ENCODE measurements at regions of chr3 and their contacts with region 1.

Region 1: GRCh38 chr3:31550452-31551251 is 17.9 kb downstream of the STT3B start:
- DNase-seq: peak in 5 of 9 donors; percentile 21 to 47 (median 29)
- ATAC-seq: peak; percentile 79
- H3K4me3 ChIP-seq: no peak overlapping the region
- H3K4me3 Mint-ChIP-seq: peak overlapping the region; percentile 0 to 69 (median 34)
- H3K27ac ChIP-seq: peak overlapping the region; percentile 1
- H3K27ac Mint-ChIP-seq: peak overlapping the region in 8 of 9 donors; percentile 19 to 79 (median 48)
- H3K4me1 ChIP-seq: peaks cover 20 to 40% of the 10 kb centered on the region in 2 donors
- H3K4me1 Mint-ChIP-seq: peaks cover 65 to 94% (median 92%) of the 10 kb centered on the region in 7 donors
- H3K27me3 ChIP-seq: no peaks in the 10 kb centered on the region
- H3K27me3 Mint-ChIP-seq: no peaks in the 10 kb centered on the region

Region 2: DNA sequence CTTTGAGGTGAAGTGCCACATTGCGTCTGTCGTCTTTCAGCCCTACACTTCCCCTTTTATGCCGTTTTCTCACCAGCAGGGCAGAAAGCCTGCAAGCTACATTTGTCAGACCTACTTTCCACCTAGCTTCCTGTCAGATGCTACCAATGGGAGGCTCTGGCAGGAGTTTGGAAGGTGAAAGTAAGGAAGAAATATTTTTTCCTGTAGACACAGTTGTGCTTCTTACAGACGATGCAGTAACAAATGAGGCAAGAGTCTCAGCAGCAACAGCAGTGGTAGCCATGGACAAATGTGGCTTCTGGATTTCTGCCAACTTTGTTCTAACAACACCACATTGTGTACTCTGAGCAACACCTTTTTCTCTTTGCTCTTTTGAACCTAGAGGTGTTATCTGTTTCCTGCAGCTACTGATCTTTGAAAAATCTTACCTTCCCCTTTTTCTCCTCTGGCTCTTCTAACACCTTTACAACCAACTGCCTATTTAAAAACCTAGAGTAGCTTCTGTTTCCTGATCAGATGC is 88.5 kb before region 1 on chr3:
- CTCF ChIA-PET with region 1: no interaction called
- POLR2A ChIA-PET with region 1: no interaction called
- intact Hi-C with region 1: loop called in 1 of 2 experiments (anchors 1 kb)
- DNase-seq: peak in 7 of 9 donors; percentile 78 to 93 (median 86)
- ATAC-seq: peak; percentile 93
- H3K4me3 ChIP-seq: peak overlapping the region; percentile 49
- H3K4me3 Mint-ChIP-seq: peak overlapping the region; percentile 28 to 95 (median 78)
- H3K27ac ChIP-seq: peak overlapping the region; percentile 68
- H3K27ac Mint-ChIP-seq: peak overlapping the region; percentile 70 to 100 (median 96)
- H3K4me1 ChIP-seq: peaks cover 49 to 59% of the 10 kb centered on the region in 2 donors
- H3K4me1 Mint-ChIP-seq: peaks cover 14 to 79% (median 68%) of the 10 kb centered on the region in 7 donors
- H3K27me3 ChIP-seq: no peaks in the 10 kb centered on the region
- H3K27me3 Mint-ChIP-seq: no peaks in the 10 kb centered on the region

Region 3: DNA sequence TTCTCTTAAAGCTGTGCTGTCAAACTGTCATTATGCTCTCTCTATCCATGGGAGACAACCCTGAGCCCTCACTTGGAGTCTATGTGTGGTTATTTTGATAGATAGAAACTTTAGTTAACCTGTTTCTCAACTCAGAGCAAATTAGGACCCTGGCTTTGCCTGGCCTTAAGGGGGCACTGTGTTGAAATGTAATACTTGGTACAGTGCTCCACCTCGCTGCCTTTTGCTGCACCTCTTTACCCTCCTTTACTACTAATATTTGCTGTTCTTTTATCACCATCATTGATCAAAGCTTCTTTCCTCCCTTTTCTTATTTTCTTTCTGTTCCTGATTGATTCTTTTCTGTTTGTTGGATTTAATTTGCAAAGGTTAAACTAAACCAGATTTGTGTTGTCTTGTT is 16.4 kb after region 1 on chr3:
- CTCF ChIA-PET with region 1: interaction called, 3 read pairs
- POLR2A ChIA-PET with region 1: interaction called, 5 read pairs
- intact Hi-C with region 1: loop called in 1 of 2 experiments (anchors 2 kb)
- DNase-seq: peak in 7 of 9 donors; percentile 14 to 41 (median 21)
- ATAC-seq: peak; percentile 82
- H3K4me3 ChIP-seq: no peak overlapping the region
- H3K4me3 Mint-ChIP-seq: peak overlapping the region in 8 of 10 donors; percentile 3 to 59 (median 56)
- H3K27ac ChIP-seq: no peak overlapping the region
- H3K27ac Mint-ChIP-seq: peak overlapping the region in 4 of 9 donors; percentile 11 to 33 (median 20)
- H3K4me1 ChIP-seq: peaks cover 38 to 57% of the 10 kb centered on the region in 2 donors
- H3K4me1 Mint-ChIP-seq: peaks cover 63 to 95% (median 91%) of the 10 kb centered on the region in 7 donors
- H3K27me3 ChIP-seq: no peaks in the 10 kb centered on the region
- H3K27me3 Mint-ChIP-seq: no peaks in the 10 kb centered on the region

Region 4: GRCh38 chr3:31592764-31593163 is 42.1 kb after region 1 on chr3:
- CTCF ChIA-PET with region 1: no interaction called
- POLR2A ChIA-PET with region 1: no interaction called
- intact Hi-C with region 1: loop called in 1 of 2 experiments (anchors 5 kb)
- DNase-seq: no peak
- ATAC-seq: no peak
- H3K4me3 ChIP-seq: no peak overlapping the region
- H3K4me3 Mint-ChIP-seq: peak overlapping the region in 5 of 10 donors; percentile 40 to 67 (median 50)
- H3K27ac ChIP-seq: no peak overlapping the region
- H3K27ac Mint-ChIP-seq: peak overlapping the region in 1 of 9 donors; percentile 67
- H3K4me1 ChIP-seq: peaks cover 0 to 4% of the 10 kb centered on the region in 2 donors
- H3K4me1 Mint-ChIP-seq: peaks cover 34 to 70% (median 52%) of the 10 kb centered on the region in 7 donors
- H3K27me3 ChIP-seq: no peaks in the 10 kb centered on the region
- H3K27me3 Mint-ChIP-seq: no peaks in the 10 kb centered on the region

Region 5: DNA sequence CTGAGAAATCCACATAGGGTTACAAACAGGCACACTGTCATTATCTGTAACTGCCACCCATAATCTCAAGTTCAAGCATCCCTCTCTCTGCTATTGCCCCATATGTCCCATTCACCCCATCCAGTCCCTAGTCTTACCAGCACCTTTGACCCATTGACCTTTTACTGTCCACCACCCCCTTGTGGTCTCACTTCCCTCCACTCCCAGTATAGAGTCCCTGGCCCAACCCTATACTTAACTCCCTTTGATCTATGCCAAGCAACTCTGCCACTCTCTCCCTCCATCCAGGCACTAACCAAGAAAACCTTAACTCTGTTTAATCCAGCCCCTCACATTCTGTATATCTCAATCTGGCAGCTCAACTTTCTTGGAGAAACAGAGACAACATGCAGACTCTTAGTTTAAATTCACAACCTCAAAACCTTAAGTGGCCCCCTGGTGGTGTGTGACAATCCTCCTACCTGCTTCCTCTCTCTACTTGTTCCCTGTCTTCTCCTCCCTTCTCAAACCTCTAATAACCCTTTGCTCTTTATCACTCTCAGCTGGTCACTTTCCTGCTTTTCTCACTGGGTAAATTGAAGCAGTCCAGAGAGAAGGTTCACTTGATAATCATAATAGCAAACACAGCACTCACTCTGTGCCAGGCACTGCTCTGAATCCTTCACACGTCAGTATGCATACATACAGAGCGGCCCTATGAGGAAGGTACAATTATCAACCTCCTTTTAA is 144.8 kb after region 1 on chr3:
- CTCF ChIA-PET with region 1: no interaction called
- POLR2A ChIA-PET with region 1: no interaction called
- intact Hi-C with region 1: loop called (anchors 1 to 2 kb)
- DNase-seq: peak in 6 of 9 donors; percentile 11 to 42 (median 36)
- ATAC-seq: peak; percentile 52
- H3K4me3 ChIP-seq: no peak overlapping the region
- H3K4me3 Mint-ChIP-seq: no peak overlapping the region
- H3K27ac ChIP-seq: no peak overlapping the region
- H3K27ac Mint-ChIP-seq: no peak overlapping the region
- H3K4me1 ChIP-seq: no peaks in the 10 kb centered on the region
- H3K4me1 Mint-ChIP-seq: peaks cover 0 to 1% (median 0%) of the 10 kb centered on the region in 7 donors
- H3K27me3 ChIP-seq: no peaks in the 10 kb centered on the region
- H3K27me3 Mint-ChIP-seq: no peaks in the 10 kb centered on the region

Region 6: GRCh38 chr3:32143849-32144757 is 593.5 kb after region 1 on chr3:
- CTCF ChIA-PET with region 1: no interaction called
- POLR2A ChIA-PET with region 1: no interaction called
- intact Hi-C with region 1: loop called (anchors 1 to 10 kb)
- DNase-seq: peak in 8 of 9 donors; percentile 30 to 70 (median 60)
- ATAC-seq: peak; percentile 75
- H3K4me3 ChIP-seq: no peak overlapping the region
- H3K4me3 Mint-ChIP-seq: no peak overlapping the region
- H3K27ac ChIP-seq: no peak overlapping the region
- H3K27ac Mint-ChIP-seq: peak overlapping the region in 1 of 9 donors; percentile 21
- H3K4me1 ChIP-seq: no peaks in the 10 kb centered on the region
- H3K4me1 Mint-ChIP-seq: peaks cover 0 to 25% (median 6%) of the 10 kb centered on the region in 7 donors
- H3K27me3 ChIP-seq: no peaks in the 10 kb centered on the region
- H3K27me3 Mint-ChIP-seq: no peaks in the 10 kb centered on the region

Region 7: DNA sequence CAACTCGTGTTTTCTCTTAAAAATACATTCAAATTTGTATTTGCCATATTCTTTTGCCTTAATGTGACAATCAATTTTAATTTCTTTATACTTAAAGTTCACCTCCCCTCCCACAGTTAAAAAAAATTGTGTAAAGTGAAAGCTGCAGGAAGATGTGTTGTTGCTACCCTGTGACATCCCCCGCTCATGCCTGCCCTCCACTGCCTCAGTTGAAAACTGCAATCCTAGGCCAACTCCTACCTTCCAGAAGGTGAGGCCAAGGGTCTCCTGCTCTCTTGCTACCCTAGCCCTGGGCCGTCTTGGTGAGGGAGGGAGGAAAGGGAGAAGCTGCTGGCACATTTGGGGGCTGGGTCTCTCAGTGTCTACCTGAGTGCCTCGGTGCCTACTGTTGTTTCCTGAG is 784.0 kb after region 1 on chr3:
- CTCF ChIA-PET with region 1: no interaction called
- POLR2A ChIA-PET with region 1: no interaction called
- intact Hi-C with region 1: no loop called
- DNase-seq: peak; percentile 15 to 72 (median 65)
- ATAC-seq: peak; percentile 83
- H3K4me3 ChIP-seq: no peak overlapping the region
- H3K4me3 Mint-ChIP-seq: peak overlapping the region; percentile 5 to 87 (median 66)
- H3K27ac ChIP-seq: peak overlapping the region; percentile 49
- H3K27ac Mint-ChIP-seq: peak overlapping the region; percentile 78 to 96 (median 92)
- H3K4me1 ChIP-seq: peaks cover 0 to 32% of the 10 kb centered on the region in 2 donors
- H3K4me1 Mint-ChIP-seq: peaks cover 39 to 67% (median 60%) of the 10 kb centered on the region in 7 donors
- H3K27me3 ChIP-seq: no peaks in the 10 kb centered on the region
- H3K27me3 Mint-ChIP-seq: no peaks in the 10 kb centered on the region